ENCODE measurements at regions of chr12 and their contacts with region 1.

Region 1: GRCh38 chr12:87995581-87996178 is 33.5 kb downstream of the C12orf50 start:
- DNase-seq: peak; percentile 50
- H3K4me3 ChIP-seq: no peak overlapping the region
- H3K27ac ChIP-seq: no peak overlapping the region
- H3K4me1 ChIP-seq: no peaks in the 10 kb centered on the region
- CTCF ChIP-seq: peak; percentile 86

Region 2: GRCh38 chr12:87274594-87275245 is 721.0 kb before region 1 on chr12:
- CTCF ChIA-PET with region 1: no interaction called
- POLR2A ChIA-PET with region 1: no interaction called
- intact Hi-C with region 1: loop called (anchors 10 kb)
- DNase-seq: peak; percentile 23
- H3K4me3 ChIP-seq: no peak overlapping the region
- H3K27ac ChIP-seq: no peak overlapping the region
- H3K4me1 ChIP-seq: no peaks in the 10 kb centered on the region
- CTCF ChIP-seq: peak; percentile 73

Region 3: GRCh38 chr12:88011755-88012154 is 16.1 kb after region 1 on chr12:
- CTCF ChIA-PET with region 1: no interaction called
- POLR2A ChIA-PET with region 1: no interaction called
- intact Hi-C with region 1: no loop called
- DNase-seq: no peak
- H3K4me3 ChIP-seq: no peak overlapping the region
- H3K27ac ChIP-seq: no peak overlapping the region
- H3K4me1 ChIP-seq: no peaks in the 10 kb centered on the region
- CTCF ChIP-seq: no peak

Region 4: GRCh38 chr12:88052686-88053085 is 57.0 kb after region 1 on chr12:
- CTCF ChIA-PET with region 1: no interaction called
- POLR2A ChIA-PET with region 1: no interaction called
- intact Hi-C with region 1: loop called (anchors 2 kb)
- DNase-seq: peak; percentile 30
- H3K4me3 ChIP-seq: no peak overlapping the region
- H3K27ac ChIP-seq: no peak overlapping the region
- H3K4me1 ChIP-seq: no peaks in the 10 kb centered on the region
- CTCF ChIP-seq: peak; percentile 75

Measured in OCI-LY7 (cell line).